ENCODE measurements at regions of chr21 and their contacts with region 1.

Region 1: GRCh38 chr21:33924079-33924765 is 8.6 kb upstream of the ATP5PO start:
- DNase-seq: peak; percentile 95
- ATAC-seq: peak; percentile 98
- H3K4me3 Mint-ChIP-seq: no peak overlapping the region
- H3K27ac Mint-ChIP-seq: peak overlapping the region; percentile 46
- H3K4me1 Mint-ChIP-seq: peaks cover 8% of the 10 kb centered on the region
- H3K27me3 Mint-ChIP-seq: no peaks in the 10 kb centered on the region
- CTCF ChIP-seq: peak; percentile 90

Region 2: DNA sequence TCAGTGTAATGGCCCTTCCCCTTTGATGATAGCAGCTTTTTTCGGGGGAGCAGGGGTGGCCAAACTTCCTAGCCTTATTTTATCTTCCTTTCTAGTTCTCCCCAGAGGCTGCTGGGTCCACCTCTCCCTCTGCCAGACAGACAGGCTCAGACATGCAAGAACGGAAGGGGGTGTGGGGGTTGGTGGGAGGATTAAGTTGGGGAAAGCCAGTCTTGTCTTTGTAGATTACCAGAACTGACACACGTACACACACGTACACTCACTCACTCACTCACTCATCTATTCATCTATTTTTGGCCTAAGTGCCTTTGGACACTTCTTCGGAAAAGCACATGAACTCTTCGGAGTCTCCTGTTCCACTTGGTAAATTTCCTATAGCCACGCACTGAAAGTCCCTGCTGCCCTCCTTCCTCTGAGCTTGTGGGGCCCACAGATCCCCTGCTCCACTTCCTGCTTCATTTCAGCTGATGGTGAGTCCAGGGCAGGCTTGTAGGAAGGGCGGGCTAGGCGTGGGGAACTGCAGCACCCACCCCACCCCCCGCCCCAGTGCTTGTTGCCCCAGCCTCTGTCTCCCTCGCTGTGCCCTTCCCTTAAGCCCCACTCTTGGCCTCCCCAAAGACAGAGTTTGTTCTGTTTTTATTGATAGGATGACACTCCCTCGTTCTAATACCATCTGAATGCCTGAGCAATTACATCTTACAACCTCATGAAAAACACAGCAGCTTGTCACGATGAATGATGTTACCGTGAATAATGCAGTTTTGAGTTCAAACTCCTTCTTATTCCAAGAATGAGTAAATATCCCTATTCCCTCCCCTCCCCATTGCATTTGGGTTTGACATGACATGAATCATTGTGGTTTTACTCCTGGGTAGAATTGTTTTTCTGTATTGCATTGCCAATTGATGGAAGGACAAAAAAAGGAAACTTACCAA is 52.1 kb after region 1 on chr21:
- CTCF ChIA-PET with region 1: interaction called, 24 read pairs
- POLR2A ChIA-PET with region 1: interaction called, 4 read pairs
- intact Hi-C with region 1: no loop called
- DNase-seq: peak; percentile 78
- ATAC-seq: peak; percentile 45
- H3K4me3 Mint-ChIP-seq: peak overlapping the region; percentile 70
- H3K27ac Mint-ChIP-seq: peak overlapping the region; percentile 99
- H3K4me1 Mint-ChIP-seq: peaks cover 71% of the 10 kb centered on the region
- H3K27me3 Mint-ChIP-seq: no peaks in the 10 kb centered on the region
- CTCF ChIP-seq: no peak

Region 3: DNA sequence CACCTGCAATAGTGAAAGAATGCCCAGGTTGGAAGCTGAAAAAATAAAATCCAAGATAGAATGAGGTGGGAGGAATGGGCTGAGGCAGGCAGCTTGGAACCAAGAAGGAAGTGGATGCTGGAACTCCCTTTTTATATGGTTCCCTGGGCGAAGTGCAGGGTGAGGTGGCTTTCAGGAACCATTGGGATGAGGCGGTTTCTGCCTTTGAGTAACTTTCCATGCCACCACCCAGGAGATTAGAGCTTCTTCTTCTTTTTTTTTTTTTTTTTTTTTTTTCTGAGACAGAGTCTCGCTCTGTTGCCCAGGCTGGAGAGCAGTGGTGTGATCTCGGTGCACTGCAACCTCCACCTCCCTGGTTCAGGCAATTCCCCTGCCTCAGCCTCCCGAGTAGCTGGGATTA is 131.4 kb after region 1 on chr21:
- CTCF ChIA-PET with region 1: interaction called, 13 read pairs
- POLR2A ChIA-PET with region 1: no interaction called
- intact Hi-C with region 1: no loop called
- DNase-seq: no peak
- ATAC-seq: no peak
- H3K4me3 Mint-ChIP-seq: no peak overlapping the region
- H3K27ac Mint-ChIP-seq: no peak overlapping the region
- H3K4me1 Mint-ChIP-seq: no peaks in the 10 kb centered on the region
- H3K27me3 Mint-ChIP-seq: no peaks in the 10 kb centered on the region
- CTCF ChIP-seq: no peak

Region 4: DNA sequence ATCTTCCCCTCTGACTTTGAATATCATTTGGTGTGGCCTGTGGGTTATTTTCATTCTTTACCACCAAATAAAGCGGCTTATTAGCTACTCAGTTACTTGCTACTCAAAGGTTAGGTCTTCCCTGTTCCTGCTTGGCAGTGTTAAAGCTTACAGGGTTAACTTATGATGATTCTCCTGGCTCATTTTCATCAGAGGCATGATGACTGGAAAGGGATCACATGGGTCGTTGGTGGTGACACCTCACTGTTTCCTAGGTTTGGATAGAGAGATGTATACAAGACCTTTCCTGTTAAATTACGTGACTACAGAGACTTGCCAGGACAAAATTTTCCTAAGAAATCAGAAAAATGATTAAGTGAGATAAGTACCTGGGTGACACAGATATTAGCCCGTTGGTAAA is 176.6 kb after region 1 on chr21:
- CTCF ChIA-PET with region 1: interaction called, 16 read pairs
- POLR2A ChIA-PET with region 1: no interaction called
- intact Hi-C with region 1: no loop called
- DNase-seq: no peak
- ATAC-seq: no peak
- H3K4me3 Mint-ChIP-seq: no peak overlapping the region
- H3K27ac Mint-ChIP-seq: no peak overlapping the region
- H3K4me1 Mint-ChIP-seq: peaks cover 83% of the 10 kb centered on the region
- H3K27me3 Mint-ChIP-seq: no peaks in the 10 kb centered on the region
- CTCF ChIP-seq: no peak

Region 5: DNA sequence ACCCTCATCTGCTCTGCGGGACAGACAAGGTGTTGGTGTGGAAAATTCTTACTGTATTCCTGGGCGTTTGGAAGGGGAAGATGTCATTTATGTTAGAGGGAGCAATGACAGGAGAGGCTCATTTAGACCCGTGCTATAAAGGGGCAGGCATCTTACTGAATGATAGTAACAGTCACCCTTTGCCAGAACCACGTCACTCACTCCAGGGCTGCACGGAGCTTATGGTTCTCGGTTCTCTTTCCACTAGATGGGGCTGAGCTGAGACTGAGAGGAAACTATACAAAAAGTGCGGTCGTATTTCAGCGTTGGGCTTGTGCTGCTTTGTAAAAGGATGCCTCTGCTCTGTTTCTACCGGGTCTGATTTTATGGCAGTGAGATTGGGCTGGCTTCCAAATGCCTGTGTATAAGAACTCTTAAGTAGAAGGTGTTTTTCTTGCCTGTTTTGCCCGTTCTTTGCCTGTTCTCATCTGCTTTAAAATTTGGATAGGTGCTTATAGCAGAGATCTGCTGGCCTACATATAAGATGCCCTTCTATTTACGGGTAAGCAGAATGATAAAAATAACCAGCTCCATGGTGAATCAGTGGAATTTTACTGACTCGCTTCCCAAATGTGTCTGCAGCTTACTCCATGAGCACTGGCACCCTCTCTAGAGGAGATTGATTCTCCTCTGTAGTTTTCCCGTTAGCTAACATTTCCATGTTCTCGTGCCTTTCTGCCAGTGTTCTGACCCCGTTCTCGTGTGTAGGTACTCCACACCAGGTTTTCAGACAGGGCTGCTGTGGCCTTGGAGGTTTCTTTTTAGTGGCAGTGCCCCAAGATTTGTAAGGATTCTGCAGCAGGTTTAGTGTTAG is 205.0 kb after region 1 on chr21:
- CTCF ChIA-PET with region 1: interaction called, 65 read pairs
- POLR2A ChIA-PET with region 1: no interaction called
- intact Hi-C with region 1: no loop called
- DNase-seq: peak; percentile 90
- ATAC-seq: peak; percentile 92
- H3K4me3 Mint-ChIP-seq: peak overlapping the region; percentile 58
- H3K27ac Mint-ChIP-seq: peak overlapping the region; percentile 92
- H3K4me1 Mint-ChIP-seq: peaks cover 80% of the 10 kb centered on the region
- H3K27me3 Mint-ChIP-seq: no peaks in the 10 kb centered on the region
- CTCF ChIP-seq: no peak

Region 6: DNA sequence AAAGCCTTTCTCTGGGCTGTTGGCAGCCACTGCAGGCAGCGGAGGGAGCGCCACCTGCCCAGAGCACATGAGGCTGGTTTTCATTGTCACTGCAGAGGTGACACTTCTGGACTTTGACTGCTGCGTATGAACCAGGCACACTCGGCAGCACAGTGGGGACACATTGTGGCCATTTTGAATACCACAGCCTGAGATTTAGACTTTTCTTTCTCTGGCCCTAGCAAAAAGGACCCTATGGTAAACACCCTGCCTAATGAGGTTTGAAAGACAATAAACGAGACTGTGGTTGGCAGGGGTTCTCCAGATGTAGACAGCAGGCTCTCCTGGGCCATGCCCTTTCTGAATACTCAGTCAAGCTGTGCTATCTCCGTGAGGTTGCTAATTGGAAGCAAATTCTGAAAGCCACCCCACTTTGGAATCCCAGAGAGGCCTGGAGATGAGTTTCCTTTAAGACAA is 427.6 kb after region 1 on chr21:
- CTCF ChIA-PET with region 1: interaction called, 216 read pairs
- POLR2A ChIA-PET with region 1: interaction called, 17 read pairs
- intact Hi-C with region 1: loop called (anchors 2 kb)
- DNase-seq: peak; percentile 46
- ATAC-seq: peak; percentile 84
- H3K4me3 Mint-ChIP-seq: no peak overlapping the region
- H3K27ac Mint-ChIP-seq: no peak overlapping the region
- H3K4me1 Mint-ChIP-seq: peaks cover 9% of the 10 kb centered on the region
- H3K27me3 Mint-ChIP-seq: peaks cover 10% of the 10 kb centered on the region
- CTCF ChIP-seq: peak; percentile 57